Prostate gland (tissue), 2 donors: ENCODE measurements at regions of chr1 and their contacts with region 1.

Region 1: GRCh38 chr1:26874896-26875295 is 11.9 kb downstream of the SFN start:
- DNase-seq: no peak
- H3K4me3 ChIP-seq: no peak overlapping the region
- H3K27ac ChIP-seq: no peak overlapping the region
- H3K4me1 ChIP-seq: peaks cover 3% of the 10 kb centered on the region
- H3K27me3 ChIP-seq: no peaks in the 10 kb centered on the region
- CTCF ChIP-seq: no peak
- POLR2A ChIP-seq: no peak

Region 2: DNA sequence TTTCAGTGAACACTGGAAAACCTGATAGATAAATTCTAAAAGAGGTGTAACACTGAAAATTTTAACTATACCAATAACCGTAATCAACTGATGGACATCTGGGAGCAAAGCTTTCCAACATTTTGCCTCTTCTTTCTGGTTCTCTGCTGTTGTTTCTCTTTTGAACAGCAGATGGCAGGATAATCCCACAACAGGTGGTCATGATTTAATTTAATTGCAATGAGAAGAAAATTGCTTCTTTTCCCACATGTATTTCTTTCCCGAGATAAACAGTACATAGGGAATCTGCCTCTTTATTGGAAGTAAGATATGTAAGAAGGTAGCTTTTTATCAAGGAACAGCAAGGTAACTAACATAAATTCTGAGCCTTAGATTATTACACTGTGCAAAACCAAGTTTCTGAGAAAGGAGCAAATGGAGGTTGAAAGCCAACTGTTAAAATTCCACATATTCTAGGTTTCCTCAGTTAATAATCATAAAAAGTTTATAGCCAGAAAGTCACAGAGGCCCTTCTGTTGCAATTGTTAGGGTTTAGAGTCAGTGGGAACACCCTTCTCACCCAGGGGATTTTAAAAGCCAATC is 272.4 kb before region 1 on chr1:
- intact Hi-C with region 1: loop called (anchors 10 kb)
- DNase-seq: peak; percentile 62
- H3K4me3 ChIP-seq: no peak overlapping the region
- H3K27ac ChIP-seq: no peak overlapping the region
- H3K4me1 ChIP-seq: peaks cover 2% of the 10 kb centered on the region
- H3K27me3 ChIP-seq: no peaks in the 10 kb centered on the region
- CTCF ChIP-seq: peak; percentile 71 to 97 (median 91)
- POLR2A ChIP-seq: no peak

Region 3: GRCh38 chr1:26853156-26853555 is 21.7 kb before region 1 on chr1:
- intact Hi-C with region 1: loop called (anchors 2 kb)
- DNase-seq: peak; percentile 94
- H3K4me3 ChIP-seq: no peak overlapping the region
- H3K27ac ChIP-seq: peak overlapping the region; percentile 30 to 85
- H3K4me1 ChIP-seq: peaks cover 28% of the 10 kb centered on the region
- H3K27me3 ChIP-seq: no peaks in the 10 kb centered on the region
- CTCF ChIP-seq: peak; percentile 77 to 94 (median 90)
- POLR2A ChIP-seq: no peak

Region 4: GRCh38 chr1:27201295-27201694 is 326.4 kb after region 1 on chr1:
- intact Hi-C with region 1: no loop called
- DNase-seq: no peak
- H3K4me3 ChIP-seq: no peak overlapping the region
- H3K27ac ChIP-seq: no peak overlapping the region
- H3K4me1 ChIP-seq: no peaks in the 10 kb centered on the region
- H3K27me3 ChIP-seq: no peaks in the 10 kb centered on the region
- CTCF ChIP-seq: no peak
- POLR2A ChIP-seq: no peak